Sigmoid colon (tissue), 7 donors: ENCODE measurements at regions of chrX and their contacts with region 1.

Region 1: DNA sequence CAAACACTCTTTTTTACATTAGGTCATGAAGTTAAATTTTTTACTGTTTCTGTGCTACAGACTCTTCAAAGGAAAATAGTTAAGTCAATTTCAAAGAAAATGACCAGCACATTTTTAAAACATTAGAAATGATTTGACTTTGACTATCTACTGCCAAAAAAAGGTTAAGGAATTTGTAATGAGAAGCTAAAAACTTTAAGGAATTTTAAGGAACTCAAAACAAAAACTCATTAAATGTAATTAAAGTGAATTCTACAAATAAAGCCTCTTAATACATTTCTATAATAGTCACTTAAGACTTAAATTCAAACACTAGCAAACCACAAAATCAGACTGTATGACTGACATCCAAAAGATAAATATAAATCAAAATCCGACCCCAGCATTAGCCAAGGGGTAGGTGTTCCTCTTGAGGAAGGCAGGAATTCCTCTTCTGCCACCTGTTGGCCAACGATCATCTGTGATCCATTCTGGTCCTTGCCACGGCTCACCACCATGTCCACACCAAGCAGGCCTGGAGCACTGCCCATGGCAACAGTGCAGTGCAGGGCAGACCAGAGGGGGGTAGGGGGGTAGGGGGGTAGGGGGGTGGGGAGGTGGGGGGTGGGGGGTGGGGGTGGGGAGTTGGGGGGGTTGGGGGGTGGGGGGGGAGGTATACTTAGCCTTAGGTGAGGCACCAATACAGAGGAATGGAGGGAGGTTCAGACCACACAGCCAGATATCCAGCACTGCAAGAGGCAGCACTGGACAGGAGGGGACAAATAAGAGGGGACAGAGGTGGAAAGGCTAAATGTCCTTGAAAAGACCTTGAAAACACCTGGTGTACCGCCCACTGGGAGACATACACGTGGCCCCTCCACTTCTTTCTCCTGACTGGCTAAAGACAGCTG is 287.4 kb downstream of the CHIC1 start:
- DNase-seq: peak; percentile 75
- H3K4me3 ChIP-seq: peak overlapping the region in 2 of 4 donors; percentile 19 to 64
- H3K27ac ChIP-seq: peak overlapping the region in 2 of 4 donors; percentile 58 to 72
- H3K4me1 ChIP-seq: peaks cover 0 to 32% (median 0%) of the 10 kb centered on the region in 4 donors
- H3K27me3 ChIP-seq: no peaks in the 10 kb centered on the region
- CTCF ChIP-seq: no peak
- EP300 ChIP-seq: no peak
- POLR2A ChIP-seq: no peak

Region 2: DNA sequence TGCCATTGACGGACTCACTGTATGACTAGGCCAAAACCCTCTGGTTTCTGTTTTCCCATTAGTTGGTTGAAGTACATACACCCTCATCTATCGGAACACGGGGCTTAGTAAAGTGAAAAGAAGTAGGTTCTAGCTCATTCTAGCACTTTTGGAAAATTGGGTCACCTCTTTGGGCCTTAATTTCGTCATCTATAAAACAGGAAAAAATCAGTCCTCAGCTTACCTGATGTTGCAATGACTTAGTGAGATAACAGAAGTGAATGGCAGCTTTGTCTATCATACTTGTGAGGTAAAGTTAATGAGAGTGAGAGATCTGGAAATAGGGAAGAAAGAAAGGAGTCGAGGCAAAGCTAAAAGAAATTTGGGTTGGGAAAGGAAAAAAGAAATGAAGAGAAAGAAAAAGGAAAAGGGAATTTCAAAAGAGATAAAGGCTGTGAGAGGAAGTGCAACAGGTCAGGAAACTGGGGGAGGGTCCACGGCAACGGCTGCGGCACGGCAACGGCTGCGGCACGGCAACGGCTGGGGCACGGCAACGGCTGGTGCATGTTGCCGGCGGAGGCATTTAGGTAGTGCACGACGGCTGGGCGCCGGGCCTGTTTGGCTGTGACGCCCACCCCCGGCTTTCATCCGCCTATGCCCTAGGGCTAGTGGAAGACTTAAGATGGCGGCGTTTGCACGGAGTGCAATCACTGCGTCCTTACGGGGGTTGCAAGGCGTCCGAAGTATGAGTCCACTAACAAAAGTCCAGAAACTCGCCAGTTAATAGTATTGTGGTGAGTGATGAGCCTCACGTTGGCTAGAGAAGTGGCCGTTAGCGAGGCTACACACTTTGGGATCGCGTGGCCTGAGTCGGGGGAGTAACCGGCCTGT is 93.6 kb after region 1 on chrX:
- intact Hi-C with region 1: loop called (anchors 2 kb)
- DNase-seq: peak; percentile 95
- H3K4me3 ChIP-seq: peak overlapping the region; percentile 58 to 78 (median 62)
- H3K27ac ChIP-seq: peak overlapping the region; percentile 81 to 88 (median 85)
- H3K4me1 ChIP-seq: peaks cover 0 to 22% (median 2%) of the 10 kb centered on the region in 4 donors
- H3K27me3 ChIP-seq: no peaks in the 10 kb centered on the region
- CTCF ChIP-seq: no peak
- EP300 ChIP-seq: no peak
- POLR2A ChIP-seq: no peak